Ovary (tissue), 10 donors: ENCODE measurements at regions of chr3 and their contacts with region 1.

Region 1: GRCh38 chr3:25273582-25274171 is 154.4 kb upstream of the RARB start:
- DNase-seq: no peak
- H3K4me3 ChIP-seq: no peak overlapping the region
- H3K27ac ChIP-seq: no peak overlapping the region
- H3K4me1 ChIP-seq: no peaks in the 10 kb centered on the region
- H3K27me3 ChIP-seq: no peaks in the 10 kb centered on the region
- CTCF ChIP-seq: no peak
- EP300 ChIP-seq: no peak
- POLR2A ChIP-seq: no peak

Region 2: DNA sequence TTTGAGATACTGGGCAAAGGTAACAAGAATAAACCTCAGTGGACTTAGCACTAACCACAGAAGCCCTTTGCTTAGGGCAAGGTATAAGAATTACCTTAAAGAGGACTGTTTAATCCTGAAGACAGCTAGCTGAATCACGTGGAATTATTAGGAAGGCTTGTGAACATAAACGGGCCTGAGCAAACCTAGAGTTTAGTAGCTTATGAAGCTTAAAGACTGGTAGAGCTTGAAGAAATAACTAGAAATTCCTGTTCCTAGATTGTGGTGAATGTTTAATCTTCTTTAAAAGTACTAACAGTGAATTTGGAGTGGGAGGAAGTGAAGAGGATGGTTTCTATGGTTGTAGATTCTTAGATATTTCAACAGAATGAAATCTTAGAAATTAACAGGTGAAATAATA is 350.1 kb before region 1 on chr3:
- intact Hi-C with region 1: no loop called
- DNase-seq: no peak
- H3K4me3 ChIP-seq: no peak overlapping the region
- H3K27ac ChIP-seq: no peak overlapping the region
- H3K4me1 ChIP-seq: no peaks in the 10 kb centered on the region
- H3K27me3 ChIP-seq: no peaks in the 10 kb centered on the region
- CTCF ChIP-seq: no peak
- EP300 ChIP-seq: no peak
- POLR2A ChIP-seq: no peak

Region 3: DNA sequence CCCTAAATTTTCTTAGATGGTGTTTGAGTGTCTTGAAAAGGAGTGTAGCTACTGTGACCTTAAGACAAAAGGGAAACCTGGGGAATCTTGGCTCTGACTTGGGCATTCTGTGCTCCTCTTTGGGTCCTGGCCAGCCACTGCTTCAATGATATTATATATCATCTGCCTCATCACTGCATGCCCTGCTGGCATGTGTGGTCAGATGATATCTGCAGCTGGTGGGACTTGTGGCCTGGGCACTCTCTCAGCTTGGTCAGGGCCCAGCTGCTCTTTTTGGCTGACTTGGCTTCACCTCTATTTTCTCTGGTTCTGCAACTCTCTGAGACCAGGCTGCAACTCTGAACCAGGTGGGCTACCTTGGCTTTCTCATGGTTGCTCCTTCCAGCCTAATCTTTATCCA is 291.8 kb before region 1 on chr3:
- intact Hi-C with region 1: loop called in 1 of 4 experiments (anchors 2 kb)
- DNase-seq: no peak
- H3K4me3 ChIP-seq: no peak overlapping the region
- H3K27ac ChIP-seq: no peak overlapping the region
- H3K4me1 ChIP-seq: no peaks in the 10 kb centered on the region
- H3K27me3 ChIP-seq: no peaks in the 10 kb centered on the region
- CTCF ChIP-seq: no peak
- EP300 ChIP-seq: no peak
- POLR2A ChIP-seq: no peak